Heart left ventricle (tissue), 16 donors: ENCODE measurements at regions of chr6 and their contacts with region 1.

Region 1: DNA sequence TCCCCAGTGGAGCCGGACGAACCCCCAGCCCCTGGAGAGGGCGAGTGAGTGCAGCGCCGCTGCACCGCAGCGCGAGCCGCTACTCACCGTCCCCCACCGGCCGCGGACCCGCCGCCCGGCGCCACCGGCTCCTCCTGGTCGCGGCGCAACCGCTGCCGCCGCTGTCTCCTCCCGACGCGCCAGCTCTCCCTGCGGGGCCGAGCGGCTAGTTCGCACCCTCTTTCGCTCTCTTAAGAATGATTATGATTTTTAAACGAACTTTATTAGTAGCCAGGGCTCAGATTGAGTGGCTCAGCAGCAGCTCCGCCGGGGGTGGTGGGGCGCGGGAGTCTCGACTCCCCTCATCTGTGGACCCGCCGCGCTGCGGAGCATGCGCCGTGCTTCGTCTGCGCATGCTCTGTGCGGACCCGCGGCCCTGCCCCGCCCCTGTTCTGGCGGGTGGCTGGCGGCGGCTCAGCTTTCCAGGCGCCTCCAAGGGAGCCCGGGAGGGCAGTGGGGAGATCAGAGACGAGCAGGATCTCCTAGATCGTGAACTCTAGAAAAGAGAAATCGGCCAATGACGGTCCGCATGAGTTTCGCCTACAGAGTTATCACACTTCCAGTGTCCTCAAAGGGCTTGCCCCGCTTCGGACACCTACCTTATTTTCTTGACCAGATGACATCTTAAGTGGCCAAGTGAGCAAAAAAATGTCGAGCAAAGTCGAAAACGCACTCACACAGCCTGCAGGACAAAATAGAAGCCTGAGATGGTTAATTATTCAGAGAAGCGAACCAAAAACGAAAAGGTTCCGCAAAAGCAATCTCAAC is at the start of gene RAB23:
- DNase-seq: peak; percentile 84 to 94 (median 89)
- ATAC-seq: peak; percentile 98 to 99 (median 98)
- H3K4me3 ChIP-seq: peak within 1 kb of the TSS; percentile 64 to 98 (median 86)
- H3K27ac ChIP-seq: peak within 1 kb of the TSS; percentile 14 to 96 (median 84)
- H3K4me1 ChIP-seq: peaks cover 0 to 15% (median 3%) of the 10 kb centered on the region in 12 donors
- H3K27me3 ChIP-seq: no peaks in the 10 kb centered on the region
- CTCF ChIP-seq: peak in 2 of 12 donors; percentile 5 to 34
- POLR2A ChIP-seq: peak in 1 of 2 donors; percentile 86
- total RNA-seq, gene RAB23: 7.6 to 15.4 (median 9.6) TPM

Region 2: GRCh38 chr6:57048577-57048976 is 173.6 kb before region 1 on chr6:
- intact Hi-C with region 1: loop called in 1 of 10 experiments (anchors 5 kb)
- DNase-seq: no peak
- ATAC-seq: no peak
- H3K4me3 ChIP-seq: no peak overlapping the region
- H3K27ac ChIP-seq: no peak overlapping the region
- H3K4me1 ChIP-seq: peaks cover 0 to 19% (median 6%) of the 10 kb centered on the region in 12 donors
- H3K27me3 ChIP-seq: no peaks in the 10 kb centered on the region
- CTCF ChIP-seq: no peak
- POLR2A ChIP-seq: no peak